Activated B cell treated with CpG ODN at 0.5 μM for 24 hours (primary cell): ENCODE measurements at regions of chr1 and their contacts with region 1.

Region 1: GRCh38 chr1:163528710-163529348 is 207.1 kb downstream of the NUF2 start:
- DNase-seq: no peak
- ATAC-seq: no peak
- H3K4me3 Mint-ChIP-seq: no peak overlapping the region
- H3K27ac Mint-ChIP-seq: no peak overlapping the region
- H3K4me1 Mint-ChIP-seq: no peaks in the 10 kb centered on the region
- H3K27me3 Mint-ChIP-seq: peaks cover 2% of the 10 kb centered on the region
- CTCF ChIP-seq: no peak

Region 2: DNA sequence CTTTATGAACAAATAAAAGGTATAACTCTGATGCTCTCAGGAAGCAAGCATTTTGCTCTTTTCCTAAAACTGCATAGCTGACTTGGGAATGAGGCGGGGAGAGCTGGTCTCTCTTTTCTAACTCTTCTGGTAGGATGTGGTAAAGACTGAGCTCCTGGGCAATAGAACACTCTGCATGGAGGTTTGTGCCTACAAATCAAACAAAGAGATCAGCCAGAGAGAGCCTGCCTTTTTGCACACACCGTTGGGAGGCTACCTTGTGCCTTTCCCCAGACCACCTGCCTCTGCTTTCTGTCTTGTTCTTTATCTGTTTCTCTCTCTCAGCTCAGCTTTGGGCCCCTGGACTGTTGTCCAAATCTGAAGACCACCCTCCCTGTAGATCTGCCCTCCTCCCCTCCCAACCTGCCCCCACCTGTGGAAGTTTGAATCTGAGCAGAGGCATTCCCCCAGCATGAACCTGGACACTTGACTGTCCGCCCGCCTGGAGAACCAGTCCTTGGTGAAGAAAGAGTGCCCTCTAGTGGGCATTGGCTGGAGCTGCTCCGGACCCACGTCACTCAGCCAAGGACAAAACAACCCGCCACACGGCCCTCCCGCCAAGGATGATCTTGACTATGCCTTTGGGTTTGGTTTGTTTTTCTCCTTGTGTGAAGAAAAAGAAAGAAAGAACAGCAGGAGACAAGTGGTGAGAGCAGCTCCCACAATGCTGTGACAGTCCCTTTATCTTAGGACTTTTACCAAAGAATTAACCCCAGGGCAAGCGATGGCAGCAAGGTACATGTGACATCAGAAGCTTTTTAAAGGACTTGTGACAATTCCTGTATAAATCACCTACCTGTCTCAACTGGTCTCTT is 1258.4 kb after region 1 on chr1:
- CTCF ChIA-PET with region 1: no interaction called
- POLR2A ChIA-PET with region 1: no interaction called
- intact Hi-C with region 1: loop called (anchors 1 kb)
- DNase-seq: peak; percentile 29
- ATAC-seq: peak; percentile 34
- H3K4me3 Mint-ChIP-seq: no peak overlapping the region
- H3K27ac Mint-ChIP-seq: no peak overlapping the region
- H3K4me1 Mint-ChIP-seq: no peaks in the 10 kb centered on the region
- H3K27me3 Mint-ChIP-seq: peaks cover 10% of the 10 kb centered on the region
- CTCF ChIP-seq: no peak